Esophagus squamous epithelium (tissue), 5 donors: ENCODE measurements at regions of chr22 and their contacts with region 1.

Region 1: DNA sequence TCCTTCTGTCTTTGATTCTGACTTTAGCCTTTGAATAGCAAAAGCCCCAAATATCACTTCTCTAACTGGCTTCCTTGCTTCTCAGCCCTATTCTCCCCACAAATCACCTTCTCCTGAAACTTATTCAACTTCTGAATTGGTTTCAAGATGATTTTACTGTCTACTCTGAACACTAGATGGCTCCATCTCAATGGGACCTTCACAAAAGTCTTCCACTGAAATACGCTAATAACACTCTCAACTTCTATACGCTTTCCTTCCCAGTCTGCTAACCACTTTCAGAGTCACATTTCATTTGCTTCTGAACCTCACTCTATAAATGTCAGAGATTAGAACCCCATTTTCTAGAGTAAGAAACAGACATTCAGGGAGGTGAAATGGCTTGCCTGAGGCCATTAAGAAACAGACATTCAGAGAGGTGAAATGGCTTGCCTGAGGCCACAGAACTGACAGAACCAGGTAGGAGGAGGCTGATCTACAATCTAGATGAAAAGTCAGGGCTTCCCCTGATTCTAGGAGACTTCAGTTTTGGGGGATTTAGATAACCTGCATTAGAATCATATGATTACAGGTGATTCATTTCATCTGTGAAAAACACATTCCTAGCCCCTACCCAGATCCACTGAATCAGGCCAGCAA is 20.6 kb downstream of the MORC2 start:
- DNase-seq: no peak
- H3K4me3 ChIP-seq: no peak overlapping the region
- H3K27ac ChIP-seq: peak overlapping the region; percentile 61 to 90 (median 81)
- H3K4me1 ChIP-seq: peaks cover 24 to 82% (median 53%) of the 10 kb centered on the region in 3 donors
- H3K27me3 ChIP-seq: no peaks in the 10 kb centered on the region
- CTCF ChIP-seq: peak; percentile 38 to 64 (median 57)
- POLR2A ChIP-seq: no peak

Region 2: DNA sequence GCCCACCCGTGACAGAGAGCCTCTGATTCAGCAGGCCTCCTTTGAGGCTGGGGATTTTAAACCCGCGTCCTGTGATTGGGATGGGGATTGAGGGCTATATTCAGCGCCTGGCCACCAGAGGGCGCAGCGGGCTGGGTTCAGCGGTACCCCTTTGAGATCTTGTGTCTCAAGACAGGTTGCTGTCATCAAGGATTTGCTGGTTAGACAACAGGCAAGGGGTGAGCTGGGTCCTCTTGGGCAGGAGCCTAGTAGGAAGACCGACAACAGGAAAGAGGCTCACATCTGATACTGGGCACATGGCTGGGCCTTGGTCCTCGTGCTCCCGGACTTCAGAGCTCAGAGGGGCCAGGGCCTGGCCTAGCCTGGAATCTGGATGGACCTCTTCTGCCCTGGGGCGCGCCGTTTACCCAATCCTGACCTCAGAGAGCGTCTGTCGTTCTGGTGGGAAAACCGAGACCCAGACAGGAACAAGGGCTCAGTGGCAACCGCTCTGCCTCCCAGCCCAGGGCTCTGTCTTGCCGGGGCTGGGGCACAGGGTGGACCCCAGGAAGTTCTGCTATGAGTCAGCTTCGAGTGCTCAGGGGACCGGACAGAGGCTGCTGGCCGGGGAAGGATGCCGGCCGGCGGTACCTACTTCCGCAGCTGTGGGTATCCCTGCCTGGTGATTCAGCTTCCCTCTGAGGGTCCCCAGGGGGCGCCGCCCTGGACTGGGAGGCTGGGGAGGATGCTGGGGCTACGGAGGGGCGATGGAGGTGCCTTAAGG is 313.3 kb before region 1 on chr22:
- intact Hi-C with region 1: no loop called
- DNase-seq: peak; percentile 24
- H3K4me3 ChIP-seq: peak overlapping the region; percentile 43 to 78 (median 52)
- H3K27ac ChIP-seq: peak overlapping the region; percentile 76 to 98 (median 93)
- H3K4me1 ChIP-seq: peaks cover 29 to 48% (median 30%) of the 10 kb centered on the region in 3 donors
- H3K27me3 ChIP-seq: no peaks in the 10 kb centered on the region
- CTCF ChIP-seq: peak; percentile 93 to 98 (median 98)
- POLR2A ChIP-seq: no peak

Region 3: GRCh38 chr22:31080848-31081649 is 133.1 kb after region 1 on chr22 and contains the start of gene SMTN:
- intact Hi-C with region 1: loop called (anchors 5 kb)
- DNase-seq: no peak
- H3K4me3 ChIP-seq: peak within 1 kb of the TSS; percentile 35 to 87 (median 68)
- H3K27ac ChIP-seq: peak within 1 kb of the TSS; percentile 85 to 98 (median 95)
- H3K4me1 ChIP-seq: peaks cover 33 to 71% (median 38%) of the 10 kb centered on the region in 3 donors
- H3K27me3 ChIP-seq: no peaks in the 10 kb centered on the region
- CTCF ChIP-seq: peak in 3 of 6 experiments; percentile 1 to 6 (median 3)
- POLR2A ChIP-seq: peak in 3 of 4 donors; percentile 96 to 98 (median 96)
- total RNA-seq, gene SMTN: 28.2 to 158 (median 45.8) TPM